CD4-positive, alpha-beta T cell (primary cell): ENCODE measurements at regions of chr19 and their contacts with region 1.

Region 1: DNA sequence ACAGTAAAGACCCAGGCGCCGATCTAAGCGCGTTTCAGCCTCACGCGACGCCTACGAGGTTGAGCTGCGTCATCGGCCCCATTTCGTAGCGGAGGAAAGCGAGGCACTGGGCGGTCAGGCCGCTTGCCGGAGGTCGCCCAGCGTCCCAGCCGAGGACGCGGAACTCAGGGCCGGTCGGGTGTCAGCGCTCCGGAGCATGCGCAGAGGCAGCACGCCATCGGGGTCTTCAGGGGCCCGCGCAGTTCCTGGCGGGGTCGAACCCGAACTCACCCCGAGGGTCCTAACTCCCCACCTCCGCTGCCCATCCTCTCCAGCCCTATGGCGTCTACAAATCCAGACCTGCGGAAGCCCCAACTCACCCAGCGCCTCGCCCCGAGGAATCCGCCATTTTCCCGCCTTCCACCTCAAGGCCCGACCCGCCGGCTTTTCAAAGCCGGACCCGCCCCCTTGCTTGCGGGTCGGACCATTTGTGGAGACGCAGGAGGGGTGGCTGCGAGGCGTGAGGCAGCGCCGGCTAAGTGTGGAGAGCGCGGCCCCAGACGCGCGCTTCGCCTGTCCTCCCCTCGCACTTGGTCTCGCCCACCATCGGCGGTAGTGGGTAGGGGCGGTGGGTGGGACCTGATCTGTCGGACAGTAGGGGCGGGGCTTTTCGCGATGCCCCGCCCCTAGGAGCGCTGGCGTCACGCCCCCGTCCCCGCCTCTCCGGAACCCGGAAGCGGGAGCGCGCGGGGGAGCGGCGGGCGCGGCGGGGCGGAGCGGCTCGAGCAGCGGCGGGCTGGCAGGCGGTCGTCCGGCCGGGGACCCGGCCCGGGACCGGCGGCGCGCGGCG is at the starts of genes HAUS8 and MYO9B:
- DNase-seq: peak; percentile 98 to 100 (median 99)
- ATAC-seq: peak; percentile 92
- H3K4me3 ChIP-seq: peak within 1 kb of the TSS; percentile 92
- H3K4me3 Mint-ChIP-seq: peak within 1 kb of the TSS; percentile 100
- H3K27ac ChIP-seq: peak within 1 kb of the TSS; percentile 80
- H3K27ac Mint-ChIP-seq: peak within 1 kb of the TSS; percentile 92
- H3K4me1 ChIP-seq: peaks cover 59% of the 10 kb centered on the region
- H3K4me1 Mint-ChIP-seq: peaks cover 68% of the 10 kb centered on the region
- H3K27me3 ChIP-seq: no peaks in the 10 kb centered on the region
- H3K27me3 Mint-ChIP-seq: no peaks in the 10 kb centered on the region
- CTCF ChIP-seq: no peak
- total RNA-seq, gene HAUS8: 20.6 to 20.7 TPM
- total RNA-seq, gene MYO9B: 176 to 184 TPM

Region 2: GRCh38 chr19:17125715-17126677 is 50.7 kb after region 1 on chr19:
- CTCF ChIA-PET with region 1: interaction called, 5 read pairs
- POLR2A ChIA-PET with region 1: interaction called, 88 read pairs
- intact Hi-C with region 1: loop called (anchors 1 to 2 kb)
- DNase-seq: peak; percentile 55 to 91 (median 74)
- ATAC-seq: peak; percentile 85
- H3K4me3 ChIP-seq: peak overlapping the region; percentile 39
- H3K4me3 Mint-ChIP-seq: peak overlapping the region; percentile 86
- H3K27ac ChIP-seq: peak overlapping the region; percentile 86 to 87
- H3K27ac Mint-ChIP-seq: peak overlapping the region; percentile 97
- H3K4me1 ChIP-seq: peaks cover 54% of the 10 kb centered on the region
- H3K4me1 Mint-ChIP-seq: peaks cover 51% of the 10 kb centered on the region
- H3K27me3 ChIP-seq: no peaks in the 10 kb centered on the region
- H3K27me3 Mint-ChIP-seq: no peaks in the 10 kb centered on the region
- CTCF ChIP-seq: no peak

Region 3: GRCh38 chr19:17183858-17184321 is 108.6 kb after region 1 on chr19:
- CTCF ChIA-PET with region 1: interaction called, 6 read pairs
- POLR2A ChIA-PET with region 1: interaction called, 14 read pairs
- intact Hi-C with region 1: no loop called
- DNase-seq: peak in 6 of 14 experiments; percentile 7 to 63 (median 46)
- ATAC-seq: peak; percentile 57
- H3K4me3 ChIP-seq: peak overlapping the region; percentile 41
- H3K4me3 Mint-ChIP-seq: peak overlapping the region; percentile 83
- H3K27ac ChIP-seq: peak overlapping the region; percentile 46 to 82
- H3K27ac Mint-ChIP-seq: peak overlapping the region; percentile 89
- H3K4me1 ChIP-seq: peaks cover 35% of the 10 kb centered on the region
- H3K4me1 Mint-ChIP-seq: peaks cover 19% of the 10 kb centered on the region
- H3K27me3 ChIP-seq: no peaks in the 10 kb centered on the region
- H3K27me3 Mint-ChIP-seq: no peaks in the 10 kb centered on the region
- CTCF ChIP-seq: no peak

Region 4: GRCh38 chr19:17226002-17226933 is 151.0 kb after region 1 on chr19 and contains the start of gene OCEL1:
- CTCF ChIA-PET with region 1: no interaction called
- POLR2A ChIA-PET with region 1: interaction called, 4 read pairs
- intact Hi-C with region 1: loop called (anchors 1 to 5 kb)
- DNase-seq: peak; percentile 90 to 99 (median 96)
- ATAC-seq: peak; percentile 88
- H3K4me3 ChIP-seq: peak within 1 kb of the TSS; percentile 61
- H3K4me3 Mint-ChIP-seq: peak within 1 kb of the TSS; percentile 95
- H3K27ac ChIP-seq: peak within 1 kb of the TSS; percentile 70 to 84
- H3K27ac Mint-ChIP-seq: peak within 1 kb of the TSS; percentile 90
- H3K4me1 ChIP-seq: peaks cover 24% of the 10 kb centered on the region
- H3K4me1 Mint-ChIP-seq: peaks cover 4% of the 10 kb centered on the region
- H3K27me3 ChIP-seq: no peaks in the 10 kb centered on the region
- H3K27me3 Mint-ChIP-seq: no peaks in the 10 kb centered on the region
- CTCF ChIP-seq: no peak
- total RNA-seq, gene OCEL1: 20.5 to 22.2 TPM

Region 5: GRCh38 chr19:17235618-17236377 is 160.5 kb after region 1 on chr19:
- CTCF ChIA-PET with region 1: no interaction called
- POLR2A ChIA-PET with region 1: interaction called, 6 read pairs
- intact Hi-C with region 1: loop called in 1 of 2 experiments (anchors 2 kb)
- DNase-seq: peak; percentile 57 to 92 (median 73)
- ATAC-seq: peak; percentile 92
- H3K4me3 ChIP-seq: peak overlapping the region; percentile 87
- H3K4me3 Mint-ChIP-seq: peak overlapping the region; percentile 87
- H3K27ac ChIP-seq: no peak overlapping the region
- H3K27ac Mint-ChIP-seq: no peak overlapping the region
- H3K4me1 ChIP-seq: peaks cover 22% of the 10 kb centered on the region
- H3K4me1 Mint-ChIP-seq: peaks cover 6% of the 10 kb centered on the region
- H3K27me3 ChIP-seq: no peaks in the 10 kb centered on the region
- H3K27me3 Mint-ChIP-seq: no peaks in the 10 kb centered on the region
- CTCF ChIP-seq: peak; percentile 67

Region 6: DNA sequence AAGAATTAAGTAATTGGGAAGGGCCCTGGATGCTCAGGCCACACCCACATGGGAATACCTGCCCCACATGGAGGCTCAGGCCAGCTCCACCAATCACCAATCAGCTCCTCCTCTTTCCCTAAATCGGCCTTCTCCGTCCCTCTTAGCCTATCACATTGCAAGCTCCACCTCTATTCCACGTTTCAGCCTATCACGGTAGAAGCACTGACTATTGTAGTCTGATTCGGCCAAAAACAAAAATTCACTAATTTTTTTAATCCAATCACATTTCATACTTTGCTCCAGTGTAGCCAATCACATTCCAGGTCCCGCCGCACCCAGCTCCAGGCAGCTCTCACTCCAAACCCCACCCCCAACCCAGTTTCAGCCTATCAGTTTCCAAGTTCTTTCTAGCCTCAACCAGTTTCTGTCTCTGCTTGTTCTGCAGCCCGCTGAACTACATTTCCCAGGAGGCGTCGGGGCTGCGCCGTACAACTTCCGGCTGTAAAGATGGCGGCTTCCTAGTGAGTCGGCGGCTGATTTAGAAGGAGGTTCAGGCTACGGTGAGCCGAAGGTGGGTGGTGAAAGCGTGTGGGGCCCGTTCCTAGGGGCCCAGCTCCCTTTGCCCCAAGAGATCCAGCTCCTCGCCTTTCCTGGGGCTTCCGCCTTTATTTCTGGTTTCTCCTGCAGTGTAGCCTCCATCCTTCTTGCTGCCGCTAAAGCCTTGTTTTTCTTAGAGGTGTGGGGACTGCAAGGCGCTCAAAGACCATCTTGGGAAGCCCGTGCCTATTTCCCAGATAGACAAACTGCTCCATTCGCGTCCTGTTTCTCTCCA is 191.9 kb after region 1 on chr19 and contains the start of gene BABAM1:
- CTCF ChIA-PET with region 1: no interaction called
- POLR2A ChIA-PET with region 1: interaction called, 8 read pairs
- intact Hi-C with region 1: loop called in 1 of 2 experiments (anchors 1 kb)
- DNase-seq: peak; percentile 85 to 99 (median 92)
- ATAC-seq: peak; percentile 94
- H3K4me3 ChIP-seq: peak within 1 kb of the TSS; percentile 84
- H3K4me3 Mint-ChIP-seq: peak within 1 kb of the TSS; percentile 83
- H3K27ac ChIP-seq: peak within 1 kb of the TSS; percentile 47 to 63
- H3K27ac Mint-ChIP-seq: peak within 1 kb of the TSS; percentile 69
- H3K4me1 ChIP-seq: peaks cover 39% of the 10 kb centered on the region
- H3K4me1 Mint-ChIP-seq: peaks cover 15% of the 10 kb centered on the region
- H3K27me3 ChIP-seq: no peaks in the 10 kb centered on the region
- H3K27me3 Mint-ChIP-seq: no peaks in the 10 kb centered on the region
- CTCF ChIP-seq: no peak
- total RNA-seq, gene BABAM1: 56.2 to 63.5 TPM